ENCODE measurements at regions of chr3 and their contacts with region 1.

Region 1: DNA sequence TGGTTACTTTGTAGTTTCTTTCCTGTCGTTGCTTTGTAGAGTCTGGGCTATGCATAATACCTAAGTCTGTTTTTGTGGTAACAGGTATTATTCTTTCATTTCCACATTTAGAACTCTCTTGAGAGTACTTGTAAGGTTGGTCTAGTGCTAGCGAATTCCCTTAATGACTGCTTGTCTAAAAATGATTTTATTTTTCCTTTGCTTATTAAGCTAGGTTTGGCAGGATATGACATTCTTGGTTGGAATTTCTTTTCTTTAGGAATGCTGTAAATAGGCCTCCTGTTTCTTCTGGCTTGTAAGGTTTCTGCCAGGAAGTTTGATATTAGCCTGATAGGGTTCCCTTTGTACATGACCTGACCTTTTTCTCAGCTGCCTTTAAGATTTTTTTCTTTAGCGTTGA is 70.1 kb upstream of the SGO1 start:
- DNase-seq: no peak
- H3K4me3 Mint-ChIP-seq: no peak overlapping the region
- H3K27ac Mint-ChIP-seq: peak overlapping the region; percentile 23
- H3K4me1 Mint-ChIP-seq: peaks cover 28% of the 10 kb centered on the region
- H3K27me3 Mint-ChIP-seq: no peaks in the 10 kb centered on the region
- CTCF ChIP-seq: no peak

Region 2: DNA sequence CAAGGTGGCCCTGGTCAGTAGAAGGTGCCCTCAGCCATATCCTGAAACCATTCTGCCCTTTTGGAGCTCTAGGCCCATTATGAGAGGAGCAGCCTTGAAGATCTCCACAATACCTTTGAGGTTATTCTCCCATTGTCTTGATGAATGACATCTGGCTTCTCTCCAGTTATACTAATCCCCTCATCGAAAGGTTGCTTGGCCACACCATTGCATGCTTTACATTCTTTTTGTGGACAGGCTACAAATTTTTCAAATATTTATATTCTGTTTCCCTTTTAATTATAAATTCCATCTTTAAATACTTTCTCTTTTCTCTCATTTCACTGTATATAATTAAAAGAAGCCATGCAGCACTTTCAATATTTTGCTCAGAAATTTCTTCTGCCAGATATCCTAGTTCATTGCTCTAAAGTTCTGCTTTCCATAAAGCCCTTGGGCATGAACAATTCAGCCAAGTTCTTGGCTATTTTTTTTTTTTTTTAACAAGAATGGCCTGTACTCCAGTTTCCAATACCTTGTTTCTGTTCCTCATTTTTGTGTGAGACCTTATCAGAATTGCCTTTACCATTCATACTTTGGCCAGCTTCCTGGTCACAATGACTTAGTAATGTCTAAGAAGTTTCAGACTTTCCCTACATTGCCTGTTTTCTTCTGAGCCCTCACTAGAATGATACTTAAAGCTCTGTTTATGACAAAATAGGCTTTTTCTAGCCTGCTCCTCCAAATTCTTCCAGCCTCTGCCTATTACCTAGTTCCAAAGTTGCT is 68.8 kb after region 1 on chr3:
- CTCF ChIA-PET with region 1: interaction called, 3 read pairs
- intact Hi-C with region 1: loop called (anchors 10 kb)
- DNase-seq: no peak
- H3K4me3 Mint-ChIP-seq: no peak overlapping the region
- H3K27ac Mint-ChIP-seq: peak overlapping the region; percentile 74
- H3K4me1 Mint-ChIP-seq: peaks cover 25% of the 10 kb centered on the region
- H3K27me3 Mint-ChIP-seq: no peaks in the 10 kb centered on the region
- CTCF ChIP-seq: no peak